OCI-LY7 (cell line): ENCODE measurements at regions of chr3 and their contacts with region 1.

Region 1: DNA sequence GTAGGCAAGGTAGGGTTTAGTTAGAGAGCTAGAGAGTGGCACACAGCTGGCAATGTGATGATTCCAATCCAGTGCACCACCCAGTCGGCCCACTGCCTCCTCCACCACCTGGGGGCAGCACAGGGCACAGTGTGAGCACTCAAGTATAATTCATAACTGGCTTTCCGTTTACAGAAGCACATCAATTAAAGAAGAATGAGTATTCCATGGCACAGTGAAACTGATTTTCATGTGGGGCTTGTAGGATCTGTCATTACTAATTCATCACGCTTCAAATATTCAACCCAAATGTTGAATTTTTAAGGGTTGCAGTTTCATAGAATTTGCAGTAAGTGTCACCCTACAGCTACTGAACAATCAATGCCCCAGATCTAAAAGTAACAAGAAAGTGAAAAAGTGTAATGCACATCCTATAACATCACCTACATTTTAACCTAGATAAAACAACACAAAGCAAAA is 149.9 kb downstream of the IGSF11 start:
- DNase-seq: peak; percentile 55
- H3K4me3 ChIP-seq: no peak overlapping the region
- H3K27ac ChIP-seq: no peak overlapping the region
- H3K4me1 ChIP-seq: no peaks in the 10 kb centered on the region
- CTCF ChIP-seq: peak; percentile 94

Region 2: GRCh38 chr3:118863731-118864322 is 20.9 kb before region 1 on chr3:
- CTCF ChIA-PET with region 1: no interaction called
- POLR2A ChIA-PET with region 1: no interaction called
- intact Hi-C with region 1: no loop called
- DNase-seq: peak; percentile 18
- H3K4me3 ChIP-seq: no peak overlapping the region
- H3K27ac ChIP-seq: no peak overlapping the region
- H3K4me1 ChIP-seq: no peaks in the 10 kb centered on the region
- CTCF ChIP-seq: peak; percentile 60

Region 3: GRCh38 chr3:119034256-119035013 is 149.7 kb after region 1 on chr3 and contains the start of gene IGSF11:
- CTCF ChIA-PET with region 1: interaction called, 4 read pairs
- POLR2A ChIA-PET with region 1: no interaction called
- intact Hi-C with region 1: loop called (anchors 2 kb)
- DNase-seq: peak; percentile 26
- H3K4me3 ChIP-seq: peak within 1 kb of the TSS; percentile 29
- H3K27ac ChIP-seq: no peak within 1 kb of the TSS
- H3K4me1 ChIP-seq: no peaks in the 10 kb centered on the region
- CTCF ChIP-seq: no peak; the same call in 1 of the 2 replicates
- total RNA-seq, gene IGSF11: not detected in 2 replicates

Region 4: DNA sequence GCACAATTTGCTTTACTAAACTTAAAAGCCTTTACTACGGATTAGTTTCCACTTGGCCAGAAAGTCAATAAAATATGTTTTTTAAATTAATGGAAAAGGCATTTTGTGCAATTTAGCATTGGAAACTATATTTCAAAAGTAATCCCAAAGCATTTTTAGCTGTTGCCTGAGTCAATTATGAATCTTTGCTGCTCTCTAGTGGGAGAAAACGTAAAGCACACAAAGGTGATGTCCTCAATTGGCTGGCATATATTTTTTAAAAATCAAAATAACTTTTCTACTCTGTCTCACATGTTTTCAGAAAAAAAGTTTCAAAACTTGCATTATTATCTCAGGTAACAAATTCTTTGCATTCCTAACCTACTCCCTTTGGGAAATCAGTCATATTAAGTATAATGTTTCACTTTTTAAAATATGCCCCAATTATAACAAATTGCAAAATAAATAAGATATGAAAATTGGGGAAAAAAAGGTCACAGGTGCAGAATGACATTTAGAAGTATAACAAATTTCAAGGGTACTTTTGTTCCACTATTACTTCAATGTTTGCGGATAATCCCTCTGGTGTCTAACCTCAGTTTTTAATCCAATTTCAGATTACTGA is 213.9 kb after region 1 on chr3:
- CTCF ChIA-PET with region 1: no interaction called
- POLR2A ChIA-PET with region 1: interaction called, 3 read pairs
- intact Hi-C with region 1: loop called (anchors 1 kb)
- DNase-seq: peak; percentile 36
- H3K4me3 ChIP-seq: no peak overlapping the region
- H3K27ac ChIP-seq: no peak overlapping the region
- H3K4me1 ChIP-seq: no peaks in the 10 kb centered on the region
- CTCF ChIP-seq: peak; percentile 91